HEK293 (cell line): ENCODE measurements at regions of chr9 and their contacts with region 1.

Region 1: DNA sequence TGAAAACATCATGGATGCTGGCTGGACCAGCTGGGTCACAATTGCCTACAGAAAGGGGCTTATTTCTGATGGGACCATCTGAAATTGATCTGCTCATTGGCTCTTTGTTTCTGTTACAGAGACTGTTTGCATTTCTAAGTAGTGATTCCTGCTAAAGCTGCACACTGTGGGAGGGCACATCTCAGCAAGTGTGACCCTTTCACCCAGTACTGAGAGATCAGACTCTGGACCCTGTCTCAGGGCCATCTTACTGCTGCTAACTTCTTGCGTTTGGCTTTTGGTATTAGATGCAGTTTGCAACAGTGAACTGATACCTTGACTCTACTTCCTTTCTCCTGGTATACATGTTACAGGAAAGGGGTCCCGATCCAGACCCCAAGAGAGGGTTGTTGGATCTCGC is 24.5 kb upstream of the KDM4C start:
- H3K4me3 ChIP-seq: no peak overlapping the region
- H3K27ac ChIP-seq: no peak overlapping the region
- H3K4me1 ChIP-seq: no peaks in the 10 kb centered on the region
- CTCF ChIP-seq: no peak

Region 2: DNA sequence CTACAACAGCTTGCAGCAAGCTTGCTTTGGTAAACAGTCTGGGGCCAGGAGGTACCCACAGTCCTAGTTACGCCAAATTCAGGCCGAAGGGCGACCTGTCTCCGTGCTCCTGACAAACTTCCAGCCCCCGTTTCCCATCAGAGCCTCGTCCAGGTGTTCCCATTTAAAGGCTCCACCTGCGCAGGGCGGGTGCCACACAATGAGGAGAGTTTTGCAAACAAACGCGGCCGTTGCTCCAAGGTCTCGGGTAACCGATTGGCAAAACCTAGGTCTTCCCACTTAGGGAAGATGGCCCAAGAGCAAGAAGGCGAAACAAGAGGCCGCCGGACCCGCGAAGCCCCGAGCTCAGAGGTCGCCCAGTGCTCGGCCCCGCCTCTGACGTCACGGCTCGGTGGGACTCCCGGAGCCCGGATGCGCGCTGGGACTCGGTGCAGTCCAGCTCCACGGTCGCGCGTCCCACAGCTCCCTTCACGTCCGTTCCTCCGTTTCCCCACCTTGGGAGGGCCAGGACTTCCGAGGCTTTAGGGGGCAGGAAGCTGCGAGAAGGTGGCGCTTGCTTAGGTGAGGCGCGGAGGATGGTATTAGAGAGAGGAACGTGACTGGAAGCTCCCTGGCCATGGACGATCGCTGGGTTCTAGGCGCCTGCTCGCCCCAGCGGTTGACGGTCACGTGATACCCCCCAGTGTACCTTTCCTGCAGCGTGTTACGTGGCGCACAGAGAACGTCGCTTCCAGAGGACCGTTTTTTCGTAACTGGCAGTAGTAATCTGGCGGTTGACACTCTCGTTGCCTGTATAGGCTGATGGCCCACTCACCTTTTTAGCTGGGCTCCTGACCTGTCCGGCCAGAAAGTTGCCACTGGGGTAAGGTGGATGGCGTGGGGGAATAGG is 17.3 kb before region 1 on chr9:
- CTCF ChIA-PET with region 1: no interaction called
- POLR2A ChIA-PET with region 1: interaction called, 10 read pairs
- H3K4me3 ChIP-seq: no peak overlapping the region
- H3K27ac ChIP-seq: no peak overlapping the region
- H3K4me1 ChIP-seq: no peaks in the 10 kb centered on the region
- CTCF ChIP-seq: no peak